ENCODE measurements at regions of chr4 and their contacts with region 1.

Region 1: GRCh38 chr4:13476915-13477314 is 7.2 kb downstream of the RAB28 start:
- DNase-seq: no peak
- ATAC-seq: no peak

Region 2: DNA sequence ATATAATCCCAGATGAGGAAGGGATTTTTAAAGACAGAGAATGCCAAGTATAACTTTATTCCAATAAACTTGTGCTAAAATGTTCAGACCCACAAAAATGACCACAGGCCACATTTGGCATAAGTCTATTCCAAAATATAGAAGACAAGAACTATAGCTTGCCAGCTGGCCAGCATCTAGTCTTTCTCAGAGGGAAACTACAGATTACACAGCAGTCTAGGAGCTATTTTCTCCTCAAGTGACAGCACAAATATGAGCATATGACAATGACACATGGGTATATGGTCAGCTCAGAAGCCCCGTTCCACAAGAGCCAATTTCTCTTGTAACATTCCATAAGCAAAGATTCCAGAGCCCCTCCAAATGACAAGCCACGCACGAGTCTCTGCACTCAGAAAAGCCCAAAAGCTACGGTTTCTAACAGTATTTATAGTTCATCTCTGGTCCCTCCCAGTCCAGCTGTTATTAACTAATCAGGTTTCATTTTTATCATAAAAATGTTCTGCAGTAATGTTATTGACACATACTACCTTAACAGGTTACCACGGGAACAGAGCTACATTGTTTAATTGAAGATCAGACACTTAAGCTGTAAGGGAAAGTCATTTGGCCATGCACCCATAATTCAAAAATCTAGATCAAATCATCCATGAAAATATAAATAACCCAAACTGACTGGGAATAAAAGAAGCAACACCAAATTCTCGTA is 63.0 kb before region 1 on chr4:
- intact Hi-C with region 1: loop called (anchors 5 kb)
- DNase-seq: no peak
- ATAC-seq: peak; percentile 65

Region 3: DNA sequence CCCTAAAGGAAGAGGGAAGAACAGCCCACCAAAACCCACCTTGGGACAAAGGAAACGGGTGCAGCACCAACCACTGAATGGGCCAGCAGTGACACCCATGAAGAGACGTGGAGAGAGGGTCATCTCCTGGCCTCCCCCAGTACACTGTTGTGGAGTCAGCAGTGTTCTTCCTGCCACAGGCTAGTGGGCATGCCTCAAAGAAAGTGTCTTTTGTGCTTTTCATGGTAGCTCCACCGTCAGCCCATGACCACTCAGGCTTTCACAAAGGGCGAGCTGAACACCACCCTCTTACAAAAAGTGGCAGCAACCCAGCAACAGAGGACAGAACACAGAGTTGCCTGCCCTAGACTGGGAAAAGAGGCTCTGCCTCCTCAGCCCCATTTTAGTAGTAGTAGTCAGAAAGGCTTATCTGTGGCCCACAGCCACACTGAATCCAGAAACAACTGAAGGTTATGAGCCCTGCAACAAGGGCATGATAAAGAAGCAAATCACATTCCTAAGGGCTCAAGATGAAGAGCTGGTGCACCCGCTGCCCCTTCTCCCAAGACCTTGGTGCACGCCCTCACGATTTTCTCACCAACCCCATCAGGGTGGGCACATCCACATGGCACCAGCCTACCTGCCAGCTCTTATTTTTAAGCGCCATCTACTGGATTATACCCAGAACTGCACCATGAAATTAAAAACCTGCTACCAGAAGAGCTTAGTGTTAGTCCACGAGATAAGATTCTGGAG is 45.9 kb before region 1 on chr4:
- intact Hi-C with region 1: no loop called
- DNase-seq: no peak
- ATAC-seq: no peak

Region 4: DNA sequence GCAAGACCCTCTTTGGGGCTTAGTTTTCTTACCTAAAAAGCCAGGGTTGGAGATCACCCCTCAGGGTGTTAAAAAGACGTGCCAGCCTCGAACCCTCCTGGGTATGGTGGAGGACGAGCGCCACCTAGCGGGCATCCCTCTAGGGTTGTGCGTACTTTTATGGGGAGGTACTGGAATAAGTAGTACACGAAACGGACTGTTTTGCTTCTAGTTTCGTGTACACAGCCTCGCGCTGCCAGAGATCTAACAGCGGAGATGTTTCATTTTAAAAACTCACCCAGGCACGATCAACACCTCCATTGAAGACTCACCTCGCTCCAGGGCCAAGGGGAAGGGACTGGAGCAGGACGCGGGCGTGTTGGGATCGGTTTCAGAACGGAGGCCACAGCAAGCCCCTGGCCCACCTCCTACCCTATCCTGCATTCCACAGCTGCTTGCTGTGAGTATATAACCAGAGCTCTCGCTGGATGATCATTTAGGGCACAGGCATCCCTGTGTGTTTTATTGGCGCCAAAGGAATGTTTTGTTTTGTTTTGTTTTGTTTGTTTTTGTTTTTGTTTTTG is 72.2 kb after region 1 on chr4:
- intact Hi-C with region 1: no loop called
- DNase-seq: peak; percentile 89
- ATAC-seq: peak; percentile 74

Region 5: GRCh38 chr4:13611283-13611842 is 134.4 kb after region 1 on chr4:
- intact Hi-C with region 1: no loop called
- DNase-seq: no peak
- ATAC-seq: peak; percentile 77

Measured in Right ventricle myocardium inferior (tissue), 1 donor.